PC-3 (cell line): ENCODE measurements at regions of chr14 and their contacts with region 1.

Region 1: DNA sequence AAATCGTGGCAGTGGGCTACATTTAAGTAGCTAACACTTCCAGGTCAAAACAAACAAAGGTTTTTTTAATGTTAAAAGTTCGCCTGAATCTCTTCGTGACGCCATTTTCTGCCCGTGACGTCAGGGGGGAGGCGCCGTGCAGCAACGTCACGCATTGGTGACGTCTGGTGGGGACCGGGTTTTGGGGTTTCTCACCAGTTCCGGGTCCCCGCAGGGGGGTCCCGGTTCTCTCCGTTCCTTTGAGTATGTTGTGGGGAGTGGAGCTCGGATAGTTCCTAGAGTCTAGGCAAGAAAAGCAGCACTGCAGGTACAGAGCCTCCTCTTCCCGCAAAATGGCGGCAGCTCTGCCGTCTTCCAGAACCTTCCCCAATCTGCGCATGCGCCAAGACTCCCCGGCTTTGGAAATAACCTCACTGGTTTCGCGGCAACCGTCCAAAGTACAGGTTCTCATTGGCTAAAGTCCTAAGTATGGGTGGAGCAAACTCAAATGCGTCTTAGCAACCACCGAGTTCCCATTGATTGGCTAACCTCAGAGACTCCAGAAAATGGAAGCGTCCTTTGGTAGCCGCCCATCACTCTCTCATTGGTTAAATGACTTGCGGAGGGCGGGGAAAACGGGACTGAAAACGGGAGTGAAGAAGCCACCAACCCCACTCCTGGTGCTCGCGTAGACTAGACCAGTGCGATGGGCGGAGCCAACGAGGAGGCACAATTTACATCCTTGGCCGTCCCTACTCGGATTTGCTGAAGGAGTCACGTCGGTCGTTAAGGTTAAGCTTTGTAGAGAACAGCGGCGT is at the start of gene RBM23:
- DNase-seq: peak; percentile 100
- ATAC-seq: peak; percentile 96
- H3K4me3 ChIP-seq: peak within 1 kb of the TSS; percentile 97
- H3K27ac ChIP-seq: peak within 1 kb of the TSS; percentile 80
- H3K4me1 ChIP-seq: peaks cover 39% of the 10 kb centered on the region
- H3K27me3 ChIP-seq: no peaks in the 10 kb centered on the region
- CTCF ChIP-seq: no peak
- total RNA-seq, gene RBM23: 78.9 and 94.9 TPM in 2 replicates

Region 2: DNA sequence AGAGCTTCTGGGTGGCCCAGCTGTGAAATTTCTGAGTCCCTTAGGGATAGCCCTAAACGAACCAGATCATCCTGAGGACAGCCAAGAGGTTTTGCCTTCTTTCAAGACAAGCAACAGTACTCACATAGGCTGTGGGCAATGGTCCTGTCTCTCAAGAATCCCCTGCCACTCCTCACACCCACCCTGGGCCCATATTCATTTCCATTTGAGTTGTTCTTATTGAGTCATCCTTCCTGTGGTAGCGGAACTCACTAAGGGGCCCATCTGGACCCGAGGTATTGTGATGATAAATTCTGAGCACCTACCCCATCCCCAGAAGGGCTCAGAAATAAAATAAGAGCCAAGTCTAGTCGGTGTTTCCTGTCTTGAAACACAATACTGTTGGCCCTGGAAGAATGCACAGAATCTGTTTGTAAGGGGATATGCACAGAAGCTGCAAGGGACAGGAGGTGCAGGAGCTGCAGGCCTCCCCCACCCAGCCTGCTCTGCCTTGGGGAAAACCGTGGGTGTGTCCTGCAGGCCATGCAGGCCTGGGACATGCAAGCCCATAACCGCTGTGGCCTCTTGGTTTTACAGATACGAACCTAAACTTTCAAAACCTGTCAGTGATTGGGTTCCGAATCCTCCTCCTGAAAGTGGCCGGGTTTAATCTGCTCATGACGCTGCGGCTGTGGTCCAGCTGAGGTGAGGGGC is 368.9 kb before region 1 on chr14:
- CTCF ChIA-PET with region 1: no interaction called
- POLR2A ChIA-PET with region 1: interaction called, 21 read pairs
- intact Hi-C with region 1: no loop called
- DNase-seq: peak; percentile 78
- ATAC-seq: peak; percentile 53
- H3K4me3 ChIP-seq: no peak overlapping the region
- H3K27ac ChIP-seq: peak overlapping the region; percentile 54
- H3K4me1 ChIP-seq: peaks cover 55% of the 10 kb centered on the region
- H3K27me3 ChIP-seq: no peaks in the 10 kb centered on the region
- CTCF ChIP-seq: no peak

Region 3: GRCh38 chr14:22829661-22830442 is 89.2 kb before region 1 on chr14 and contains the start of gene MRPL52:
- CTCF ChIA-PET with region 1: no interaction called
- POLR2A ChIA-PET with region 1: interaction called, 18 read pairs
- intact Hi-C with region 1: no loop called
- DNase-seq: peak; percentile 92
- ATAC-seq: peak; percentile 92
- H3K4me3 ChIP-seq: peak within 1 kb of the TSS; percentile 96
- H3K27ac ChIP-seq: peak within 1 kb of the TSS; percentile 17
- H3K4me1 ChIP-seq: peaks cover 17% of the 10 kb centered on the region
- H3K27me3 ChIP-seq: no peaks in the 10 kb centered on the region
- CTCF ChIP-seq: no peak
- total RNA-seq, gene MRPL52: 114 and 180 TPM in 2 replicates

Region 4: DNA sequence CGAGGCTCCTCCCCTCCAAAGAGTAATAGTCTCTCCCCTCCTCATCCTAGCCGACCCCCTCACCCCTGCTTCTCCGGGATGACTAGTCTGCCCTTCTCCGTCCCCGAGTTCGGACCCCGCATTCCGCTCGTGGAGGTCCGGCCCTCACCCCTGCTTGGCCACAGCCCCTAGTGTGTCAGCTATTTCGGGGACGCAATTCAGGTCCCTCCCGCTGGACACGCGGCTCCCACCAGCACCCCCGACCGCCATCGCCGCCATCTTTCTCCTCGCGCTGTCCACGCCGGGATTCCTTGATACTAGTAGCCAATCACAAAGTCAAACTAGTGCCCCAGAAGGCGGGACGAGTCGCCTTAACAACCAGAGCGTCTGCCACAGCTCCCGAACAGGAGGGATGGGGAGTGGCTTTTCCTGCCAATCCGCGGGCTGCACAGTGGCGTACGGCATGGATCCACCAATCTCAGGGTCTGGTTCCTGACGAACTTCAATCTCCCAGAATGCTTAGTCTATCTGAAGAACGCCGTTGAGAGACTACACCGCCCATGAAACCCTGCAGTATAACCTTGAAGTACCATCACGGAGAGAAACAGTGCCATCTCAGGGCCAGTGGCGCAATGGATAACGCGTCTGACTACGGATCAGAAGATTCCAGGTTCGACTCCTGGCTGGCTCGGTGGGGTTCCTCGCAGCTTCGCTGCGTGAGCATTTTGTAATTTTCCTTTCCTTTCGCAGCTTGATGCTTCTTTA is 10.3 kb after region 1 on chr14 and contains the start of gene PRMT5:
- CTCF ChIA-PET with region 1: interaction called, 14 read pairs
- POLR2A ChIA-PET with region 1: interaction called, 3 read pairs
- intact Hi-C with region 1: loop called (anchors 1 kb)
- DNase-seq: peak; percentile 99
- ATAC-seq: peak; percentile 90
- H3K4me3 ChIP-seq: peak within 1 kb of the TSS; percentile 90
- H3K27ac ChIP-seq: peak within 1 kb of the TSS; percentile 54
- H3K4me1 ChIP-seq: peaks cover 30% of the 10 kb centered on the region
- H3K27me3 ChIP-seq: no peaks in the 10 kb centered on the region
- CTCF ChIP-seq: no peak
- total RNA-seq, gene PRMT5: 101 and 113 TPM in 2 replicates